ENCODE measurements at regions of chr6 and their contacts with region 1.

Region 1: DNA sequence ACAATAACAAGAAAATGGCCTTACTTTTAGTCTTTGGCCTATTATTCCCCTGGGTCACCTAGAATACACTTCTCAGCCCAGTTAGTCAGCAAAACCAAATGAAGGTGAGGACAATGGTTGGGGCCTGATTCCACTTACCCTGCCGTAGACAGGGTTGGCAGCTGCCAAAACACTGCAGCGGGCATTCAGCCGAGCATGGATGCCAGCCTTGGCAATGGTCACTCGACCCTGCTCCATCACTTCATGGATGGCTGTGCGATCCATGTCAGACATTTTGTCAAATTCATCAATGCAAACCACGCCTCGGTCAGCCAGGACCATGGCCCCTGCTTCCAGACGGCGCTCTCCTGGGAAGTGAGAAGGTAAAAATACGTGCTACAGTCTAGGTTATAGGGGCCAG is 8.4 kb downstream of the MCM3 start:
- DNase-seq: no peak
- H3K4me3 Mint-ChIP-seq: no peak overlapping the region
- H3K27ac Mint-ChIP-seq: no peak overlapping the region
- H3K4me1 Mint-ChIP-seq: peaks cover 22% of the 10 kb centered on the region
- H3K27me3 Mint-ChIP-seq: no peaks in the 10 kb centered on the region

Region 2: DNA sequence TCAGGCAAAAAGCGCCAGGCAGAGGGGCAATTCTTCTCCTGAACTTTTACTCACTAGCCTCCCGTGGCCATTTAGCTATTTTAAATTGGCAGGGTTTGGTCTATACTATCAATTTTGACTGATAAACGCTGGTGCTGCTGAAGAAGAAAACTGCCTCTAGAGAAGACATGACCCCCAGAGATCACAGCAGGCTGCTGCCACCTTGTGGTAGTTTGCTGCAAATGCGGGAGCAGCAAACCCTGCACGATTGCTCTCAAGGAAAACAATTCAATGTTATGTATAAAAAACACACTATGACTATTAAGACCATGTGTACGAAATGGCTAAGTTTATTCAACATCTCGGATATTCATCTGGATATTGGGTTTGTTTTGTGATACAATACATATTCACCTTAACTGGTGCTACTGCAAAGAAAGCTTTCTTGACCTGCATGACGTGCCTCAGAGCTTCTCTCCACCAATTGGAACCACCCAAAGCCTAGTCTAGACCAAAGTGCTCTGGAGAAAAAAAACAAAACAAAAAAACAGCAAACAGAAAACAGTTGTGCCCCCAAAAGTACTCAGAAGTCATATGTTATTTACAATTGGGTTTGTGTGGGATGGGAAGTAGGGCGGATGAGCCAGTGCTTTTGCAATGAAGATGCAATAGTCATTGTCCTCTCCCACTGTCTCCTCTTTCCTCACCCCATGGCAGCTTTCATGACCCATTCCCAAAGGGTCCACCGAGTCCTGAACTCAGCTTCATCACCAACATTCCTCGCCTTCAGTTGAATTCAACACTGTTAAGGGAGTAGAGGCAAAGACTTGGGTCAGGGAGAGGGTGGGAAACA is 12.2 kb before region 1 on chr6:
- CTCF ChIA-PET with region 1: interaction called, 47 read pairs
- POLR2A ChIA-PET with region 1: interaction called, 8 read pairs
- intact Hi-C with region 1: no loop called
- DNase-seq: peak; percentile 82
- H3K4me3 Mint-ChIP-seq: no peak overlapping the region
- H3K27ac Mint-ChIP-seq: peak overlapping the region; percentile 49
- H3K4me1 Mint-ChIP-seq: no peaks in the 10 kb centered on the region
- H3K27me3 Mint-ChIP-seq: no peaks in the 10 kb centered on the region

Measured in activated CD4-positive, alpha-beta memory T cell treated with anti-CD3 and anti-CD28 coated beads for 36 hours (primary cell).